ENCODE measurements at regions of chr6 and their contacts with region 1.

Region 1: DNA sequence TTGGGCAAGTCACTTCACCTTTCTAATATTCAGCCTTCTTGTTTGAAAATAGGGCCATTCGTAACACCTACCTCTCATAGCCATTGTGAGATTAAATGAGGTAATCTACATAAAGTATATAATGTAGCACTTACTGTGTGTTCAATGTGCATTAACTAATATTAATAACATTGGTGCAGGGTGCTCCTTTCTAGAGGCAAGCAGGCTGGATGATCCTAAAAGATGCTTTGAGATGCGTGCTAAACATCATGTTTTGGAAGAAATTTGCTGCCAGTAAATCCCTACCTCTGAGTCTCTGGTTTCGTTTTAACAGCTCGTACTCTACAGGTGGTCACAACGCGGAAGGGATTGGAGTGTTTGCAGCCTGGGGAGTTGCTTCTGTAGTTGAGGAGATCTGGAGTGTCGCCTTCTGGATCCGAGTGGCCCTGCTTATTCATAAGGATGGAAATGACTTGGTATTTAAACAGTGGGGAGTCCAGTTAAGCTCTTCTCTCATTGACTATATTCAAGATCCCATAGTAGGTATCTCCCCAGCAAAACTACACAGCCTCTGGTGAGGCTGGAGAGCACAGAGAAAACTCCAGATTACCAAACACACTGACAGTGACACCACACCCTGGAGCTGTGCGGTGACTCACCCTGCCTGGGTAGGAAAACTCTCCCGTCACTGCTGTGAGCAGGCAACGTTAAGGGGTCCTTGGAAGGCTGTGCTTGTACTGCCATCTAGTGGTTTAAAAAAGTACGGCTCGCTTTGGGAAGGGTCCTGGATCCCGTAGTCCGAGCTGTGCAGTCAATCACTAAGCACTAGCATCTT is 107.9 kb downstream of the MAP3K7 start:
- DNase-seq: peak; percentile 57 to 87 (median 80)
- ATAC-seq: peak; percentile 98
- H3K4me3 ChIP-seq: no peak overlapping the region
- H3K4me3 Mint-ChIP-seq: peak overlapping the region in 4 of 10 donors; percentile 29 to 62 (median 53)
- H3K27ac ChIP-seq: no peak overlapping the region
- H3K27ac Mint-ChIP-seq: peak overlapping the region in 8 of 9 donors; percentile 3 to 89 (median 58)
- H3K4me1 ChIP-seq: peaks cover 6 to 13% of the 10 kb centered on the region in 2 donors
- H3K4me1 Mint-ChIP-seq: peaks cover 9 to 54% (median 26%) of the 10 kb centered on the region in 7 donors
- H3K27me3 ChIP-seq: no peaks in the 10 kb centered on the region
- H3K27me3 Mint-ChIP-seq: no peaks in the 10 kb centered on the region

Region 2: GRCh38 chr6:89352278-89353117 is 1126.5 kb before region 1 on chr6 and contains the start of gene UBE2J1:
- CTCF ChIA-PET with region 1: no interaction called
- POLR2A ChIA-PET with region 1: no interaction called
- intact Hi-C with region 1: loop called in 1 of 2 experiments (anchors 10 kb)
- DNase-seq: peak; percentile 34 to 87 (median 61)
- ATAC-seq: peak; percentile 89
- H3K4me3 ChIP-seq: peak within 1 kb of the TSS; percentile 67
- H3K4me3 Mint-ChIP-seq: peak within 1 kb of the TSS; percentile 96 to 100 (median 98)
- H3K27ac ChIP-seq: peak within 1 kb of the TSS; percentile 88
- H3K27ac Mint-ChIP-seq: peak within 1 kb of the TSS; percentile 95 to 98 (median 97)
- H3K4me1 ChIP-seq: peaks cover 27 to 30% of the 10 kb centered on the region in 2 donors
- H3K4me1 Mint-ChIP-seq: peaks cover 44 to 81% (median 72%) of the 10 kb centered on the region in 7 donors
- H3K27me3 ChIP-seq: no peaks in the 10 kb centered on the region
- H3K27me3 Mint-ChIP-seq: no peaks in the 10 kb centered on the region
- total RNA-seq, gene UBE2J1: 18.8 to 47.7 (median 27.7) TPM

Region 3: DNA sequence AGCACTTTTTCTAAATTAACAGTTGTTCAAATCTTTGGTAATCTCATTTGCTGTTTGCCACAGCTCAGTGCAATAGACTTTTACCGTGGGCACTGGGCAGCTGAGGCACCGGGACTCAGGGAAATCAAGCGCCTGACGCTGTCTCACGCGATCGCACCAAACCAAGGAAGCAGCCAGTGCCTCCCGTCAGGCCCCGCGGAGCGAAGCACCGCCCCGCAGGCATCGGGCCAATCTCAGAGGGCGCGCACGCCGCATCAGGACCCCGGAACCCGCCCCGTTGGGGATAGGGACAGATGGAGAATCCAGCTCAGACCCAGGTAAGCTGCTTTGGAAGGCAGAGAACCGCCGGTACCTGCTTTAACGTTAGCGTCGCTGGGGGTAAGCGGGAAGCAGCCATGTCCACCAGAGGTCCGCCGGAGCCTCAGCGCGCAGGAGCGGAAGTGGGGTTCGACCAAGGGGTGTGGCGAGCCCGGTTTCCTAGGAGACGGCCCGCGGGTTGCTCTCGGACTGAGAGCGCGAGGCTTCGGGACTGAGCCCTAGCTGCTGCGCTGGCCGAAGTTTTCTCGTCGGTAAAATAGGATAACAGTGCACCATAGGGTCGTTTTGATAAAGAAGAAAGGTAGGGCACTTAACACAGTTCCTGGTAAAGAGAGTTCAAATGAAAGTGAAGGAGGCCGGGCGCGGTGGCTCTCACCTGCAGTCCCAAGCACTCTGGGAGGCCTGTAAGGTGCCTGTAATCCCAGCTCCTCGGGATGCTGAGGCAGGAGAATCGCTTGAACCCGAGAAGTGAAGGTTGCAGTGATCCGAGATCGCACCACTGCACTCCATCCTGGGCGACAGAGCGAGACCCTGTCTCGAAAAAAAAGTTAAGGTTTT is 840.4 kb before region 1 on chr6 and contains the start of gene LYRM2:
- CTCF ChIA-PET with region 1: no interaction called
- POLR2A ChIA-PET with region 1: interaction called, 3 read pairs
- intact Hi-C with region 1: loop called in 1 of 2 experiments (anchors 5 kb)
- DNase-seq: peak; percentile 85 to 93 (median 91)
- ATAC-seq: peak; percentile 97
- H3K4me3 ChIP-seq: peak within 1 kb of the TSS; percentile 99
- H3K4me3 Mint-ChIP-seq: peak within 1 kb of the TSS; percentile 90 to 98 (median 94)
- H3K27ac ChIP-seq: peak within 1 kb of the TSS; percentile 91
- H3K27ac Mint-ChIP-seq: peak within 1 kb of the TSS; percentile 96 to 99 (median 99)
- H3K4me1 ChIP-seq: peaks cover 9 to 15% of the 10 kb centered on the region in 2 donors
- H3K4me1 Mint-ChIP-seq: peaks cover 6 to 45% (median 27%) of the 10 kb centered on the region in 7 donors
- H3K27me3 ChIP-seq: no peaks in the 10 kb centered on the region
- H3K27me3 Mint-ChIP-seq: peaks cover 0 to 3% (median 0%) of the 10 kb centered on the region in 5 donors
- total RNA-seq, gene LYRM2: 18.1 to 40.7 (median 32.0) TPM

Region 4: DNA sequence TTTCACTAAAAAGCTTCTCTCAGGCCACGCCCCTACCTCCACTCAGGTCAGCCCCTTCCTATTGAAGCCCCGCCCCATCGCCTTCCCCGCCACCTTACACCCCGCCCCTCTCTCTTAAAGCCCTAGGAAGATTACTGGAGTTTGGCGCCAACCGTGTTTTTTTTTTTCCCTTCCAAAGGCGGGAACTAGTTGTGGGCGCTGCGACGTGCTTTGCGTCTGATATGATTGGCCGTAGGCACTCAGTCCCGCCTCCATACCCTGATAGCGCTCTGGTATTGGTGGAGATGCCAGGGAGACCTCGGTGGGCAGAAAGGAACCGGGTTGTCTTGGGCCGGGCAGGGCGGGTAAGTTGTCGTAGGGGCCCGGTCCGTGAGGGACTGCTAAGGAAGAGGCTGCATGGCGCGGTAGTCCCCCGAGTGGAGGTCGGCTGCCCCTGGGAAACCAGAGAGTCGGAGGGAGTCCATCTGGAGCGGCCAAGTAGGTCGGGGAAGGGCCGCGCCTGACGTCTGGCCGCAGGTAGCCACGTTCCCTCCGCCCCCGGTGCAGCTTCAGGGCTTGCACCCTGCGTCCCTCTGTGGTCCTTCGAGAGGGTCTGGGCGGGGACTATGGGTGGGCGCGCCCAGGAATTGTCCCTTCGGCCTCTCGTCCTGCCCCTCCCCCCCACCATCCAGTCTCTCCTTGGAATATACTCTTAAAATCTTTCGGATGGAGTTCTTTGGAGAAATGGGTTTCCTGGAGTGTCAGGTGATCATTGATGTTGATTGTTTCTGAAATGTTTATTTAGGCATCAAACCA is 649.2 kb before region 1 on chr6 and contains the start of gene CASP8AP2:
- CTCF ChIA-PET with region 1: interaction called, 3 read pairs
- POLR2A ChIA-PET with region 1: no interaction called
- intact Hi-C with region 1: loop called (anchors 2 to 5 kb)
- DNase-seq: peak; percentile 71 to 98 (median 96)
- ATAC-seq: peak; percentile 97
- H3K4me3 ChIP-seq: peak within 1 kb of the TSS; percentile 96
- H3K4me3 Mint-ChIP-seq: peak within 1 kb of the TSS; percentile 92 to 100 (median 99)
- H3K27ac ChIP-seq: peak within 1 kb of the TSS; percentile 83
- H3K27ac Mint-ChIP-seq: peak within 1 kb of the TSS; percentile 84 to 97 (median 95)
- H3K4me1 ChIP-seq: peaks cover 11 to 14% of the 10 kb centered on the region in 2 donors
- H3K4me1 Mint-ChIP-seq: peaks cover 11 to 47% (median 33%) of the 10 kb centered on the region in 7 donors
- H3K27me3 ChIP-seq: no peaks in the 10 kb centered on the region
- H3K27me3 Mint-ChIP-seq: no peaks in the 10 kb centered on the region
- total RNA-seq, gene CASP8AP2: 21.2 to 44.8 (median 34.5) TPM

Region 5: DNA sequence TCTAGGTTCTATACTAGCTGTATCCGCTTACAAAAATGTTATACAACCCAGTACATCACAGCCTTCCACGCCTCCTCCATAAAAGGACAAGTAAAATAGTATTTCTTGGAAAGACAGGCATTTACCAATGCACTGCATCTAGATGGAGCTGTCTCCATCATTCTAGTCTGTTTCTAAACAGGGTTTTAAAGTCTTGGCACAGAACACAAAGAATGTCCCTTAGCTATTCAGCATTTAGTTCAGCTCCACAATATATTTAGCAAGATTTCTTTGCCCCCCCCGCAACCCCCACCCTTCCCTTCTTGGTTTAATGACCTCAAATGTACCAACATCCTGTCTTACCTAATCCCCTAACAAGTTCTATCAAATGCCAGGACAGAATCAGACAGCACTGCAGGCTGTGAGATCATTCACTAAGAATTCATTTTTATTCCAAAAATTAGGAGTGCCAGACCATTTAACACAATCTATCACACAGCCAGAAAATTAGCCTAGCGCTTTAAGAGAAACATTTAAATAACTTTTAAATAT is 380.9 kb before region 1 on chr6:
- CTCF ChIA-PET with region 1: no interaction called
- POLR2A ChIA-PET with region 1: no interaction called
- intact Hi-C with region 1: loop called in 1 of 2 experiments (anchors 5 kb)
- DNase-seq: peak in 4 of 9 donors; percentile 18 to 58 (median 28)
- ATAC-seq: peak; percentile 72
- H3K4me3 ChIP-seq: no peak overlapping the region
- H3K4me3 Mint-ChIP-seq: peak overlapping the region in 9 of 10 donors; percentile 4 to 71 (median 37)
- H3K27ac ChIP-seq: peak overlapping the region; percentile 4
- H3K27ac Mint-ChIP-seq: peak overlapping the region in 8 of 9 donors; percentile 46 to 89 (median 78)
- H3K4me1 ChIP-seq: peaks cover 0 to 59% of the 10 kb centered on the region in 2 donors
- H3K4me1 Mint-ChIP-seq: peaks cover 49 to 97% (median 88%) of the 10 kb centered on the region in 7 donors
- H3K27me3 ChIP-seq: no peaks in the 10 kb centered on the region
- H3K27me3 Mint-ChIP-seq: peaks cover 0 to 4% (median 0%) of the 10 kb centered on the region in 5 donors

Region 6: DNA sequence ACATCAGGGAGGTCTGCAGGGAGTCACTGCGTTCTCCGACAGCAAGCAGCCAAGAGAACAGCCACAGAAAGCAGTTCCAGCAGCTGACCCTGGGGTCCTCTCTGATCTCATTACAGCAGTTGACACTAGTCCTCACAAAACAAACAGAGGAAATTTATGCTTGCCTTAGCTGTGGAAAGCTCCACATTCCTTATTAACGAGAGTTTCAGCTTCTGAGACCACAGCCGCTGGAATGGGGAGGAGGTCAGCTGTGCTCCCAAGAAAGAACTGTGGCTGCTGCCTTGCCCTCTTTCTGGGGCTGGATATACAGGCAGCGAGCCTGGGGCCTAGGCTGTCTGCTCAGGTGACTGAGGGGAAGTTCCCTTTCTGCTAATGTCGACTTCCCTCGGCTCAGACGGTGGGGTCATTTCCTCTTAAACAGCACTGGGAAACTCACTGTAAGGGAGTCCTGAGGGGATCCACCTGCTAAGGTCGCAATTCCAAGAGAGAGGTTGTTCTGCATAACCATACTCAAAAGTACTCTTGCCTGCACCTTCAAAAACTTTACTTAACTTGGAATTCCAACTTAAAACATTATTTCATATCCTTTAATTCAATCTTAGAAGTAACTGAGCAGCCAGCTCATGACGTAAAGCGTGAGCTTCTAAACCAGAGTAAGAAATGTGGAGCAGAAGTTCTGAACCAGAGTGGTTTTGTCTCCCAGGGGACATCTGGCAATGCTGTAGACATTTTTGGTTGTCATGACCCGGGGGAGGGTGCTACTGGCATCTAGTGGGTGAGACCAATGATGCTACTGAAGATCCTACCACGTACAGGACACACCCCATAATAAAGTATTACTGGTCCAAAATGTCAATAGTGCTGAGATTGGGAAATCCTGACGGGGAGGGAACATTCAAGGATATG is 262.7 kb before region 1 on chr6:
- CTCF ChIA-PET with region 1: interaction called, 5 read pairs
- POLR2A ChIA-PET with region 1: no interaction called
- intact Hi-C with region 1: loop called (anchors 1 kb)
- DNase-seq: peak in 5 of 9 donors; percentile 61 to 82 (median 63)
- ATAC-seq: peak; percentile 69
- H3K4me3 ChIP-seq: peak overlapping the region; percentile 18
- H3K4me3 Mint-ChIP-seq: peak overlapping the region in 7 of 10 donors; percentile 42 to 74 (median 68)
- H3K27ac ChIP-seq: peak overlapping the region; percentile 85
- H3K27ac Mint-ChIP-seq: no peak overlapping the region
- H3K4me1 ChIP-seq: peaks cover 0 to 97% of the 10 kb centered on the region in 2 donors
- H3K4me1 Mint-ChIP-seq: peaks cover 0 to 33% (median 31%) of the 10 kb centered on the region in 7 donors
- H3K27me3 ChIP-seq: no peaks in the 10 kb centered on the region
- H3K27me3 Mint-ChIP-seq: no peaks in the 10 kb centered on the region

Region 7: DNA sequence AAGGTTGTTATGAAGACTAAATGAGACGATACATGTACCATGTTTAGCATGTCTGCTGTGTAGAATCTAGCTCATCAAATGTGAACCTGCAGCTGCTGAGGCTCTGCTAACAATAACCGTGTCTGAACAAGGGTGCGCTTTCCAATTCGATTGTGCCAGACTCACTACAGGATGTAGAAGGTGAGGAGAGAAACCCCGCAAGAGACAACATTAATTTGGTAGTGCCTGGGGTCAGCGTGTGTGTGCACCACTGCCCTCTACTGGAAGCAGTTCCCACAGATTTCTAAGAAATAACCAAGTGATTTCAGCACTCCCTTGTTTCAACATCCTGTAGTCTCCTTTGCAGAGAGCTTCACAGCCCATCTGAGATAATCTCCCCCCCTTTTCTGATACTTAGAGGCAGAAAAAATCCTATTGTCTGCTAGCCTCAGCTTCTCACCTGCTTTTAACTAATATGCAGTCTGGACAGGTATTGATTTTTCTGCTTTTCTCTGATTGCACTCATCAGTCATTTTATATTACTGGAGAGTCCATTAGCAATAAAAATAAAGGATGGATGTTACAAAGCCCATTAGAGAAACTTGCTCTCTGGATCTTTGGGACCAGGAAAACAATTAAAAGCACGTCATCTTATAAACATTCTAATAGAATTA is 85.6 kb before region 1 on chr6:
- CTCF ChIA-PET with region 1: interaction called, 8 read pairs
- POLR2A ChIA-PET with region 1: interaction called, 6 read pairs
- intact Hi-C with region 1: loop called (anchors 1 kb)
- DNase-seq: peak; percentile 43 to 87 (median 81)
- ATAC-seq: peak; percentile 81
- H3K4me3 ChIP-seq: no peak overlapping the region
- H3K4me3 Mint-ChIP-seq: peak overlapping the region in 9 of 10 donors; percentile 2 to 59 (median 26)
- H3K27ac ChIP-seq: no peak overlapping the region
- H3K27ac Mint-ChIP-seq: peak overlapping the region; percentile 7 to 77 (median 26)
- H3K4me1 ChIP-seq: peaks cover 18 to 29% of the 10 kb centered on the region in 2 donors
- H3K4me1 Mint-ChIP-seq: peaks cover 15 to 43% (median 38%) of the 10 kb centered on the region in 7 donors
- H3K27me3 ChIP-seq: no peaks in the 10 kb centered on the region
- H3K27me3 Mint-ChIP-seq: peaks cover 0 to 4% (median 0%) of the 10 kb centered on the region in 5 donors